Naive thymus-derived CD4-positive, alpha-beta T cell (primary cell): ENCODE measurements at regions of chr16 and their contacts with region 1.

Region 1: DNA sequence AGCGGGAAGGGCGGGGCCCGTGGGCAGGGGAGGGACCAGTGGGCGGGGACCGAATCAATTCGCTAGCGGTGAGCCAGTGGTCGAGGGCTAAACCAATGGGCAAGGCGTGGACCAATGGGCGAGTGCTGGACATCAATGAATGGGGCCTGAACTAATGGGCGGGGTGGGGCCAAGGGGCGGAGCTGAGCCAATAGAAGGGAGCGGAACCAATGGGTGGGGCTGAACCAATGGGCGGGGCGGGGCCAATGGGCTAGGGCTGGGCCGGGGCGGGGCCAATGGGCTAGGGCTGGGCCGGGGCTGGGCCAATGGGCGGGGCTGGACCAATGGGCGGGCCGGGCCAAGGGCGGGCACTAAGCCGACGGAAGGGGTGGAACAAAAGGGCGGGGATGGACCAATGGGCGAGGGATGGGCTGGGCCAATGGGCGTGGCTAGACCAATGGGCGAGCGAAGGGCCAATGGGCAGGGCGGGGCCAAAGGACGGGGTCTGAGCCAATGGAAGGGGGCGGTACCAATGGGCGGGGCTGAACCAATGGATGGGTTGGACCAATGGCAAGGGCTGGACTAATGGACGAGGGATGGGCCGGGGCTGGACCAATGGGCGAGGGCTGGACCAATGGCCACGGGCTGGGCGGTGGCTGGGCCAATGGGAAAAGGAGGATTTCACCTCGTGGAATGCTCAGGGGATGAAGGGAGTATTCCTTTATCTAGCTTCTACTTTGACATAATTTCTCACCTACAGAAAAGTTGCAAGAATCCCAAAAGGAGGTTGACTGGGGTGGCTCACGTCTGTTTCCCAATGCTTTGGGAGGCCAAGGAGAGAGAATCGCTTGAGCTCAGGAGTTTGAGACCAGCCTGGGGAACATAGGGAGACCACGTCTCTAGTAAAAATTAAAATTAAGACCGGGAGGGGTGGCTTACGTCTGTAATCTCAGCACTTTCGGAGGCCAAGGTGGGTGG is 6.0 kb upstream of the FLYWCH1 start:
- DNase-seq: peak; percentile 75 to 98 (median 78)
- ATAC-seq: peak; percentile 91
- H3K4me3 ChIP-seq: peak overlapping the region; percentile 70
- H3K4me3 Mint-ChIP-seq: peak overlapping the region; percentile 89 to 98 (median 92)
- H3K27ac ChIP-seq: peak overlapping the region; percentile 62
- H3K27ac Mint-ChIP-seq: peak overlapping the region in 7 of 9 donors; percentile 14 to 88 (median 74)
- H3K4me1 ChIP-seq: peaks cover 7 to 12% of the 10 kb centered on the region in 2 donors
- H3K4me1 Mint-ChIP-seq: peaks cover 12 to 35% (median 28%) of the 10 kb centered on the region in 7 donors
- H3K27me3 ChIP-seq: no peaks in the 10 kb centered on the region
- H3K27me3 Mint-ChIP-seq: peaks cover 0 to 8% (median 0%) of the 10 kb centered on the region in 5 donors

Region 2: DNA sequence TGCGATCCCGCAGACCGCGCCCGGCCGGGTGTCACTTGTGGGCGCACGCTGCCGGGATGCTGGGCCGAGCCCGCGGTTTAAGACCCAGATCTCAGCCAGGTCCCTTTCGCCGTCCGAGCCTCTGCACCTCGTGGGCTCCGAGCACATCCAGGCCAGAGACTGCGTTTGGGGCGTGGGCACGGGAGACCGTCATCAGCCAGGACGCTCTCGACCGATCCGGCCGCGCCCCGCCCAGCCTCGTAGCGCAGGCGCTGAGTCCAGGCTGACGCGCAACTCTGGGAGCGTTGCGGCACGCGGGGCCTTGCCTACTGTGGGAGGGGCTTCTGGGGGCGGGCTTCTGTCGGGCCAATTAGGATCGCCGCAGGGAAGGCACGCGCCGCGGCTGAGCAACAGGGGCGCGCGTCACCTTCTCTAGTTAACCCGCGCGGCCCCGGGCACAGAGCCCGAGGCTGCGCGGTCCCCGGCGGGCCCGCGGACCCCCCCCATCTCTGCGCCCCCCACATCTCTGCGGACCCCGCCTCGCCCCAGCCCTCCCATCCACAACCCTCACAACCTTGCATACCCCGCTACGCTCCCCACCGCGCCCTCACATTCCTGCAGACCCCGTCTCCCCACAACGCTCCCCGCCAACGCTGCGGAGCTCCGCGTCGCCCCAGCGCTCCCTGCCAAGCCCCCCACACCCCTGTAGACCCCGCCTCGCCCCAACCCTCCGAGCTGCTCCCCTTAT is 373.8 kb before region 1 on chr16:
- CTCF ChIA-PET with region 1: no interaction called
- POLR2A ChIA-PET with region 1: no interaction called
- intact Hi-C with region 1: loop called (anchors 1 to 10 kb)
- DNase-seq: peak; percentile 94 to 97 (median 96)
- ATAC-seq: peak; percentile 93
- H3K4me3 ChIP-seq: peak overlapping the region; percentile 71
- H3K4me3 Mint-ChIP-seq: peak overlapping the region; percentile 84 to 100 (median 96)
- H3K27ac ChIP-seq: peak overlapping the region; percentile 93
- H3K27ac Mint-ChIP-seq: peak overlapping the region; percentile 96 to 100 (median 98)
- H3K4me1 ChIP-seq: peaks cover 5 to 7% of the 10 kb centered on the region in 2 donors
- H3K4me1 Mint-ChIP-seq: peaks cover 0 to 31% (median 20%) of the 10 kb centered on the region in 7 donors
- H3K27me3 ChIP-seq: no peaks in the 10 kb centered on the region
- H3K27me3 Mint-ChIP-seq: no peaks in the 10 kb centered on the region

Region 3: GRCh38 chr16:2752035-2752849 is 153.5 kb before region 1 on chr16 and contains the start of gene SRRM2:
- CTCF ChIA-PET with region 1: no interaction called
- POLR2A ChIA-PET with region 1: no interaction called
- intact Hi-C with region 1: loop called in 1 of 2 experiments (anchors 1 kb)
- DNase-seq: peak; percentile 92 to 98 (median 96)
- ATAC-seq: peak; percentile 92
- H3K4me3 ChIP-seq: peak within 1 kb of the TSS; percentile 68
- H3K4me3 Mint-ChIP-seq: peak within 1 kb of the TSS; percentile 89 to 98 (median 94)
- H3K27ac ChIP-seq: peak within 1 kb of the TSS; percentile 100
- H3K27ac Mint-ChIP-seq: peak within 1 kb of the TSS; percentile 96 to 100 (median 99)
- H3K4me1 ChIP-seq: peaks cover 35 to 40% of the 10 kb centered on the region in 2 donors
- H3K4me1 Mint-ChIP-seq: peaks cover 37 to 57% (median 50%) of the 10 kb centered on the region in 7 donors
- H3K27me3 ChIP-seq: no peaks in the 10 kb centered on the region
- H3K27me3 Mint-ChIP-seq: no peaks in the 10 kb centered on the region
- total RNA-seq, gene SRRM2: 590 to 1,259 (median 1,020) TPM

Region 4: GRCh38 chr16:2919511-2920255 is 14.0 kb after region 1 on chr16:
- CTCF ChIA-PET with region 1: interaction called, 16 read pairs
- POLR2A ChIA-PET with region 1: interaction called, 8 read pairs
- intact Hi-C with region 1: loop called (anchors 1 kb)
- DNase-seq: peak in 8 of 9 donors; percentile 40 to 74 (median 56)
- ATAC-seq: peak; percentile 88
- H3K4me3 ChIP-seq: no peak overlapping the region
- H3K4me3 Mint-ChIP-seq: peak overlapping the region in 1 of 10 donors; percentile 24
- H3K27ac ChIP-seq: no peak overlapping the region
- H3K27ac Mint-ChIP-seq: peak overlapping the region in 5 of 9 donors; percentile 53 to 76 (median 69)
- H3K4me1 ChIP-seq: no peaks in the 10 kb centered on the region
- H3K4me1 Mint-ChIP-seq: peaks cover 5 to 11% (median 6%) of the 10 kb centered on the region in 7 donors
- H3K27me3 ChIP-seq: no peaks in the 10 kb centered on the region
- H3K27me3 Mint-ChIP-seq: no peaks in the 10 kb centered on the region

Region 5: GRCh38 chr16:2968738-2969544 is 63.2 kb after region 1 on chr16 and contains the start of gene PAQR4:
- CTCF ChIA-PET with region 1: no interaction called
- POLR2A ChIA-PET with region 1: no interaction called
- intact Hi-C with region 1: loop called in 1 of 2 experiments (anchors 1 kb)
- DNase-seq: peak; percentile 49 to 91 (median 71)
- ATAC-seq: peak; percentile 88
- H3K4me3 ChIP-seq: peak within 1 kb of the TSS; percentile 64
- H3K4me3 Mint-ChIP-seq: peak within 1 kb of the TSS; percentile 59 to 80 (median 75)
- H3K27ac ChIP-seq: no peak within 1 kb of the TSS
- H3K27ac Mint-ChIP-seq: peak within 1 kb of the TSS in 2 of 9 donors; percentile 16 to 70
- H3K4me1 ChIP-seq: peaks cover 19 to 28% of the 10 kb centered on the region in 2 donors
- H3K4me1 Mint-ChIP-seq: peaks cover 10 to 32% (median 24%) of the 10 kb centered on the region in 7 donors
- H3K27me3 ChIP-seq: peaks cover 0 to 28% of the 10 kb centered on the region in 2 donors
- H3K27me3 Mint-ChIP-seq: peaks cover 10 to 26% (median 16%) of the 10 kb centered on the region in 5 donors
- total RNA-seq, gene PAQR4: 0.40 to 39.4 (median 0.79) TPM

Region 6: GRCh38 chr16:3012828-3013420 is 107.2 kb after region 1 on chr16 and contains the start of gene CLDN9:
- CTCF ChIA-PET with region 1: no interaction called
- POLR2A ChIA-PET with region 1: no interaction called
- intact Hi-C with region 1: no loop called
- DNase-seq: no peak
- ATAC-seq: peak; percentile 42
- H3K4me3 ChIP-seq: no peak within 1 kb of the TSS
- H3K4me3 Mint-ChIP-seq: peak within 1 kb of the TSS in 3 of 10 donors; percentile 40 to 56 (median 55)
- H3K27ac ChIP-seq: no peak within 1 kb of the TSS
- H3K27ac Mint-ChIP-seq: no peak within 1 kb of the TSS
- H3K4me1 ChIP-seq: peaks cover 9% of the 10 kb centered on the region in 2 donors
- H3K4me1 Mint-ChIP-seq: peaks cover 5 to 23% (median 12%) of the 10 kb centered on the region in 7 donors
- H3K27me3 ChIP-seq: no peaks in the 10 kb centered on the region
- H3K27me3 Mint-ChIP-seq: peaks cover 0 to 26% (median 3%) of the 10 kb centered on the region in 5 donors
- total RNA-seq, gene CLDN9: 0.15 to 0.37 TPM in 2 of 5 experiments, not detected in the others

Region 7: GRCh38 chr16:3143612-3144320 is 238.1 kb after region 1 on chr16:
- CTCF ChIA-PET with region 1: no interaction called
- POLR2A ChIA-PET with region 1: no interaction called
- intact Hi-C with region 1: no loop called
- DNase-seq: no peak
- ATAC-seq: no peak
- H3K4me3 ChIP-seq: no peak overlapping the region
- H3K4me3 Mint-ChIP-seq: no peak overlapping the region
- H3K27ac ChIP-seq: no peak overlapping the region
- H3K27ac Mint-ChIP-seq: no peak overlapping the region
- H3K4me1 ChIP-seq: no peaks in the 10 kb centered on the region
- H3K4me1 Mint-ChIP-seq: peaks cover 0 to 4% (median under 1%) of the 10 kb centered on the region in 7 donors
- H3K27me3 ChIP-seq: no peaks in the 10 kb centered on the region
- H3K27me3 Mint-ChIP-seq: no peaks in the 10 kb centered on the region